IMR-90 (cell line): ENCODE measurements at regions of chr11 and their contacts with region 1.

Region 1: GRCh38 chr11:64378335-64378880 is 19.4 kb downstream of the RPS6KA4 start:
- DNase-seq: no peak
- ATAC-seq: peak; percentile 43
- H3K4me3 ChIP-seq: no peak overlapping the region
- H3K27ac ChIP-seq: no peak overlapping the region
- H3K4me1 ChIP-seq: no peaks in the 10 kb centered on the region
- H3K27me3 ChIP-seq: peaks cover 19% of the 10 kb centered on the region
- CTCF ChIP-seq: no peak
- POLR2A ChIP-seq: no peak
- RAD21 ChIP-seq: no peak

Region 2: DNA sequence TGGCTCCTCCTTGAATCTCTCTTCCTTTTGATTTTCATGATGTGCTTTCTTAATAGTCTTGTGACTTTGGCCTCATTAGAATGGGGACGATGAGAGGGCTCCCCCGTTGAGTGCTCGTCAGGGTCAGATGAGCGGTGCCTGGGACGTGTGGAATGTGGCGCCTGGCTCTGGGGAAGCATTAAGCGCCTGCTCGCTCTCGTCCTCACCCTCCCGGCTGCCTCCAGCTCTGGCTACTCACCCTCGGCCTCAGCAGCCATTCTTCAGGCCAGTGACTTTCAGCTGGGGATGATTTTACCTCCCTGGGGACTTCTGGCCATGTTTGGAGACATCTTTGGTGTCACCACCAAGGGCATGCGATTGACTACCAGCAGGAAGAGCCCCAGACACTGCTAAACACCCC is 50.3 kb after region 1 on chr11:
- CTCF ChIA-PET with region 1: no interaction called
- POLR2A ChIA-PET with region 1: no interaction called
- dilution Hi-C with region 1: no loop called
- in situ Hi-C with region 1: no loop called
- intact Hi-C with region 1: no loop called
- DNase-seq: no peak
- ATAC-seq: no peak
- H3K4me3 ChIP-seq: no peak overlapping the region
- H3K27ac ChIP-seq: no peak overlapping the region
- H3K4me1 ChIP-seq: no peaks in the 10 kb centered on the region
- H3K27me3 ChIP-seq: peaks cover 54% of the 10 kb centered on the region
- CTCF ChIP-seq: no peak
- POLR2A ChIP-seq: no peak
- RAD21 ChIP-seq: no peak

Region 3: DNA sequence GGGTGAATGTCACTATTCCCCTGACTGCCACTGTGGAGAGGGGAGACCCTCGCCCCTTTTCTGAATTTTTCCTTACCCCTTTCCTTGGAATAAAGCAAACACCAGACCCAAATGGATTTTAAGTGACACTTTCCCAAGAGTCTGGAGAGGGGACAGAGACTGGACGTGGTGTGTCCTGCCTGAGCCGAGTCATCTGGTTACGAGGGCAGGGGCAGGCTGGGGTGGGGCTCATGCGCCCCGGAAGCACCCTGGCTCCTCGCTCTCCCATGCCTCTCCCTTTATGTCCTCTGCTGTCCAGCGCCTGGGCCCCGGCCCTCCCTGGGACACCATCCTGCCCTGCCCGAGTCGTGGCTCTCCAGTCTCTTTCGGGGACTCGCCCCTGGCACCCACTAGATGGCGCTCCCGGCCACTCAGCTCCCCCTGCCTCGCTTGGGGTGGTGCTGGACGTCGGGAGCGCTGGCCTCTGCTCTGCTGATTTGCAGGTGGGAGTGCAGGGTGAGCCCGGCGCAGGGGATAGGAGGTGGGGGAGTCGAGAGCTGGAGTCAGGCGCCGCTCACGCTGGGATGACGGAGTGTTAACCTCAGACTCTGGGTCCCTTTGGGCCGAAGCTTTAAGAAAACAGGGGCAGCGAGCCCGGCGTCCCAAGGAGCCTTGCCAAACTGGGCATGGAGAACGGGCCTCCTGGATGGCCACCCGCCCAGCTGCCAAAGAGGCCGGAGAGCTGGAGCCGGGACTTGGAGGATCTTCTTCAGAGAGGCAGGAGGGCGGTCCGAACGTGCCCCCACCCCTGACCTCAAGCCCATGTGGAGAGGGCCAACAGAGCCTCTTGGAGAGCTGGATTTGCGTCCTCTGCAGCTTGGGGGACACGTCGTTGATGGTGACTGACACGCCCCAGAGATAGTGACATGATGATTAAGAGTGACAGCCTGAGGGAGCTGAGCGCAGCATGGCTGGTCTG is 70.5 kb after region 1 on chr11:
- CTCF ChIA-PET with region 1: no interaction called
- POLR2A ChIA-PET with region 1: no interaction called
- dilution Hi-C with region 1: no loop called
- in situ Hi-C with region 1: no loop called
- intact Hi-C with region 1: loop called (anchors 5 kb)
- DNase-seq: peak; percentile 43
- ATAC-seq: peak; percentile 95
- H3K4me3 ChIP-seq: no peak overlapping the region
- H3K27ac ChIP-seq: no peak overlapping the region
- H3K4me1 ChIP-seq: peaks cover 5% of the 10 kb centered on the region
- H3K27me3 ChIP-seq: peaks cover 38% of the 10 kb centered on the region
- CTCF ChIP-seq: peak; percentile 74
- POLR2A ChIP-seq: no peak
- RAD21 ChIP-seq: peak; percentile 60

Region 4: DNA sequence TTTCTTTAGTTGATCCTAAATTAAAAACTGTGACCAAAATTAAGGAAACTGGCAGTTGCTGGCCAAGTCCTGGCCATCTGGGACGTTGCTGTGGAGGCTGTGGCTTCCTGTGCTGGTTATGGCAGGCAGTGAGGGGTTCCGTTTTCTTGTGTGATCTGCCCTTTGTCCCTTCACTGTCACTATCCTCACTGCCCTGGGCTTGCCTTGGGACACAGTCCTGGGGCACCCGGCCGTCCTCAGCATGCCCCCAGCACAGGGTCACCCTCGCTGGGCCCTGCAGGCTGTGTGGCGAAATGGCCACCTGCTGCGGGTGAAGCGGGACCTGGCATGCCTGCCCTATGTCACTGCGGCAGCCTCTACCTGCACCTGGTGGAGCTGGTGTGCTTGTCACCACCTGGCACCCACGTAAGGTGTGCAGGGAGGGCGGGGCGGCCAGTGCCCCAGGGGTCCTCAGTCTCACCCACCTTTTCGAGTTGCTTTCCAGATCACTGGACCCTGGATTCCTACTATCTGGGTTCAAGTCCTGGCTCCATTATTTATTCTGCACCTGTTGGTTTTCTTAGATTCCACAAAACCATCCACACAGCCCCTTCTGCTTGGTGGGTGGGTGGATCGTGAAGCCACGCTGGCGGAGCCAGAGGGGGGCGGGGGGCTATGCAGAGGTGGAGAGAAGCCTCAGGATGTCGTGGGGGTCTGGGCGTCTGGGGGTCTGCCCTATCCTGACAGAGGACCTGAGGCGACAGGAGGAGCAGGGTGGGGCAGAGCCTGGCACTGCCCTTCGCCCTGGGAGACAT is 160.3 kb after region 1 on chr11:
- CTCF ChIA-PET with region 1: no interaction called
- POLR2A ChIA-PET with region 1: no interaction called
- dilution Hi-C with region 1: no loop called
- in situ Hi-C with region 1: no loop called
- intact Hi-C with region 1: no loop called
- DNase-seq: no peak
- ATAC-seq: no peak
- H3K4me3 ChIP-seq: no peak overlapping the region
- H3K27ac ChIP-seq: no peak overlapping the region
- H3K4me1 ChIP-seq: peaks cover 2% of the 10 kb centered on the region; the same call in 1 of the 2 replicates
- H3K27me3 ChIP-seq: peaks cover 32% of the 10 kb centered on the region
- CTCF ChIP-seq: no peak
- POLR2A ChIP-seq: no peak
- RAD21 ChIP-seq: no peak